Activated CD8-positive, alpha-beta T cell treated with anti-CD3 and anti-CD28 coated beads, Interleukin-2, amount 10 ng/mL, durations not matched to agents 7 days and 5 days (primary cell): ENCODE measurements at regions of chr10 and their contacts with region 1.

Region 1: GRCh38 chr10:69957886-69958555 is 94.6 kb upstream of the MACROH2A2 start:
- DNase-seq: peak; percentile 50
- ATAC-seq: peak; percentile 78
- H3K4me3 Mint-ChIP-seq: no peak overlapping the region
- H3K27ac Mint-ChIP-seq: no peak overlapping the region
- H3K4me1 Mint-ChIP-seq: no peaks in the 10 kb centered on the region
- H3K27me3 Mint-ChIP-seq: peaks cover 16% of the 10 kb centered on the region

Region 2: GRCh38 chr10:69786791-69787190 is 171.2 kb before region 1 on chr10:
- CTCF ChIA-PET with region 1: interaction called, 22 read pairs
- POLR2A ChIA-PET with region 1: no interaction called
- DNase-seq: no peak
- ATAC-seq: no peak
- H3K4me3 Mint-ChIP-seq: no peak overlapping the region
- H3K27ac Mint-ChIP-seq: no peak overlapping the region
- H3K4me1 Mint-ChIP-seq: peaks cover 2% of the 10 kb centered on the region
- H3K27me3 Mint-ChIP-seq: peaks cover 16% of the 10 kb centered on the region

Region 3: GRCh38 chr10:69939061-69939460 is 19.0 kb before region 1 on chr10:
- CTCF ChIA-PET with region 1: interaction called, 12 read pairs
- POLR2A ChIA-PET with region 1: no interaction called
- DNase-seq: no peak
- ATAC-seq: no peak
- H3K4me3 Mint-ChIP-seq: no peak overlapping the region
- H3K27ac Mint-ChIP-seq: no peak overlapping the region
- H3K4me1 Mint-ChIP-seq: no peaks in the 10 kb centered on the region
- H3K27me3 Mint-ChIP-seq: no peaks in the 10 kb centered on the region

Region 4: DNA sequence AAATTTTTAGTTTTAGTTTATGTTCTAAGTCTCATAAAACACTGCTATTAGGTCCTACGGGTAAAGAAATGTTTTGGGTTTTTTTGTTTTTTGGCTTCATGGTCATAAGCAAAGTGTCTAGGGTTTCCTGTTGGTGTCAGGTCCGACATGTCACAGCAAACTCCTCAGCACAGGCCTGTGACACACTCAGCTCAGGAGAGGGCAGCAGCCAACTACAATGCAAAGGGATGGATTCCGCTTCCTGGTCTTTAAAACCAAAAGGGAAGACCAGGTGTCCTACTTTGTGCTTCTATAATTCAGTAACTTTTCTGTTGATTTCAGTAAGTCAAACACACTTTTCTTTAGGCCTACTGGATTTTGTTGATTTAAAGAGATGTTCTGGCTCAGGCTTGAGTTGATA is 10.8 kb after region 1 on chr10:
- CTCF ChIA-PET with region 1: interaction called, 36 read pairs
- POLR2A ChIA-PET with region 1: no interaction called
- DNase-seq: no peak
- ATAC-seq: no peak
- H3K4me3 Mint-ChIP-seq: no peak overlapping the region
- H3K27ac Mint-ChIP-seq: no peak overlapping the region
- H3K4me1 Mint-ChIP-seq: no peaks in the 10 kb centered on the region
- H3K27me3 Mint-ChIP-seq: peaks cover 27% of the 10 kb centered on the region

Region 5: DNA sequence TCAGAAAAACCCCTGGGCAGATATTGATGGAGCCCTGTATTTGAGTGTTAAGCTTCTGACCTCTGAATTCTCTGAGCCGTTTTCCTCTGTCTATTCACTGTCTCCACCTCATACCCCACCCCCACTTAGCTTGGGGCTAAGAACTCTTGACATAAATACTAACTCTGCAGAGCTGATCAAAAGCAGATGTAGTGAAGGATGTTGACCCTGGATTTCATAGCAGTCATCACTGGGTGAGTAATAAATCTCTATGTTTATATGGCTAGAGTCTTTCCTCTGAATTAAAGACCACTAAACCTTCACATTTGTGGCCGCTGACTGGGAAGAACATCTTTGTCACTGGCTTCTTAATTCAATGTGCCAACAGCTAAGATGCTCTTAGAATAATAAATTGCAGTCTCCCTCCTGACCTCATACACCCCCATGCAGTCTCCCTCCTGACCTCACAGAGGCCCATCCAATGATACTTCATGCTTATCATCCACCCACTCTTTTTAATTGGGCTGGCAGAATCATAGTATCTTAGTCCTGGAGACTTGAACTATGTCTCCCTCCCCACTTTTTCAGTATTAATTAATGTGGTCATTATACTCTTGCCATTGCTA is 16.6 kb after region 1 on chr10:
- CTCF ChIA-PET with region 1: interaction called, 36 read pairs
- POLR2A ChIA-PET with region 1: no interaction called
- DNase-seq: no peak
- ATAC-seq: no peak
- H3K4me3 Mint-ChIP-seq: no peak overlapping the region
- H3K27ac Mint-ChIP-seq: no peak overlapping the region
- H3K4me1 Mint-ChIP-seq: peaks cover 12% of the 10 kb centered on the region
- H3K27me3 Mint-ChIP-seq: peaks cover 36% of the 10 kb centered on the region

Region 6: DNA sequence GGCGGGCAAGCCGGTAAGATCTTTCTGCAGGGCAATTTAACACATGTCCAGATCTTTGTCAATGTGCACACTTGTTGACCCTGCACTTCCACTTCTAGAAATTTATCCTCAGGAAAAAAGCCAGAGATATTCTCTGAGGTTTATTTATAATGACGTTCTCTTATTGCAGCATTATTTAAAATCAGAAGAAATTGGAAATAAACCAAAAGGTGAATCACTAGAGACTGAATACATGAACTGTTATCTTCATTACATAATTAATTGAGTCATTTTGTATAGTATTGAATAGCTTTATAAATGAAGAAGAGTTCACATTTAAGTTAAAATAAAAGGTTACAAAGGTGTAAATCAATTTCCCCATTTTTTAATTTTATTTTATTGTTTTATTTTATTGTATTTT is 228.6 kb after region 1 on chr10:
- CTCF ChIA-PET with region 1: no interaction called
- POLR2A ChIA-PET with region 1: no interaction called
- DNase-seq: no peak
- ATAC-seq: no peak
- H3K4me3 Mint-ChIP-seq: no peak overlapping the region
- H3K27ac Mint-ChIP-seq: no peak overlapping the region
- H3K4me1 Mint-ChIP-seq: peaks cover 5% of the 10 kb centered on the region
- H3K27me3 Mint-ChIP-seq: peaks cover 17% of the 10 kb centered on the region